Activated CD4-positive, alpha-beta memory T cell treated with anti-CD3 and anti-CD28 coated beads, Interleukin-2, amount 10 ng/mL, durations not matched to agents 7 days and 5 days (primary cell): ENCODE measurements at regions of chr6 and their contacts with region 1.

Region 1: GRCh38 chr6:106163446-106163965 is 77.4 kb downstream of the PRDM1 start:
- DNase-seq: peak; percentile 77
- H3K4me3 Mint-ChIP-seq: peak overlapping the region; percentile 64
- H3K27ac Mint-ChIP-seq: peak overlapping the region; percentile 97
- H3K4me1 Mint-ChIP-seq: peaks cover 83% of the 10 kb centered on the region
- H3K27me3 Mint-ChIP-seq: no peaks in the 10 kb centered on the region

Region 2: GRCh38 chr6:105992315-105992961 is 171.1 kb before region 1 on chr6:
- CTCF ChIA-PET with region 1: interaction called, 11 read pairs
- POLR2A ChIA-PET with region 1: interaction called, 35 read pairs
- DNase-seq: peak; percentile 92
- H3K4me3 Mint-ChIP-seq: peak overlapping the region; percentile 87
- H3K27ac Mint-ChIP-seq: peak overlapping the region; percentile 74
- H3K4me1 Mint-ChIP-seq: peaks cover 70% of the 10 kb centered on the region
- H3K27me3 Mint-ChIP-seq: peaks cover 5% of the 10 kb centered on the region

Region 3: GRCh38 chr6:106103728-106104109 is 59.8 kb before region 1 on chr6:
- CTCF ChIA-PET with region 1: interaction called, 5 read pairs
- POLR2A ChIA-PET with region 1: interaction called, 153 read pairs
- DNase-seq: peak; percentile 63
- H3K4me3 Mint-ChIP-seq: peak overlapping the region; percentile 87
- H3K27ac Mint-ChIP-seq: peak overlapping the region; percentile 97
- H3K4me1 Mint-ChIP-seq: peaks cover 76% of the 10 kb centered on the region
- H3K27me3 Mint-ChIP-seq: no peaks in the 10 kb centered on the region

Region 4: GRCh38 chr6:106125925-106126435 is 37.5 kb before region 1 on chr6:
- CTCF ChIA-PET with region 1: interaction called, 4 read pairs
- POLR2A ChIA-PET with region 1: interaction called, 16 read pairs
- DNase-seq: peak; percentile 81
- H3K4me3 Mint-ChIP-seq: peak overlapping the region; percentile 63
- H3K27ac Mint-ChIP-seq: peak overlapping the region; percentile 79
- H3K4me1 Mint-ChIP-seq: peaks cover 55% of the 10 kb centered on the region
- H3K27me3 Mint-ChIP-seq: peaks cover 2% of the 10 kb centered on the region

Region 5: DNA sequence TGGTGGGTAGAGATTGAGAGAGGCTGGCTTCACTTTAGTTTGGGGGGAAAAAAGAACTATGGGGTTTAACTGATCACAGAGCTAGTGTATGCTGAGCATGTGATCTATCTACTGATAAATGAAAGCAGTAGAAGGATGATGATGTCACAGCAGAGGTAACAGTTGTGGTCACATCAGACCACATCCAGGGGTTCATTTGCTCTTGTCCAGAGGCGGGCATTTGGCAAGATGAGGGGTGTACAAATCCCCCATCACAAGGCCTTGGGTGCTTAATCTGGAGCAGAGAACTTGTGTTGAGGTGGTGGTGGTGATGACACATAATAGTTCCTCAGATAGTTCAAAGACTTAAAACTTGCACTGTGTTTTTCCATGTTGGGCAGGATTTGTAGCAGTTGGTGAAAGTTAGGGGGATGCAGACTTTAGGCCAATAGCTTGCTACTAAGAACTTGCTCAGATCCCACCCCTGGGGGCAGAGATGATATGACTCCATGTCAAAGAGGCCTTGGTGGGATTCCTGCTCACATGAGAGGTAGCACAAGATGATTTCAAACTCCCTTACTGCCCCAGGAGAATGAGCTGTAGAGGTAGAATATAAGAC is 13.9 kb before region 1 on chr6:
- CTCF ChIA-PET with region 1: interaction called, 4 read pairs
- POLR2A ChIA-PET with region 1: interaction called, 14 read pairs
- DNase-seq: peak; percentile 67
- H3K4me3 Mint-ChIP-seq: no peak overlapping the region
- H3K27ac Mint-ChIP-seq: peak overlapping the region; percentile 71
- H3K4me1 Mint-ChIP-seq: peaks cover 58% of the 10 kb centered on the region
- H3K27me3 Mint-ChIP-seq: no peaks in the 10 kb centered on the region

Region 6: DNA sequence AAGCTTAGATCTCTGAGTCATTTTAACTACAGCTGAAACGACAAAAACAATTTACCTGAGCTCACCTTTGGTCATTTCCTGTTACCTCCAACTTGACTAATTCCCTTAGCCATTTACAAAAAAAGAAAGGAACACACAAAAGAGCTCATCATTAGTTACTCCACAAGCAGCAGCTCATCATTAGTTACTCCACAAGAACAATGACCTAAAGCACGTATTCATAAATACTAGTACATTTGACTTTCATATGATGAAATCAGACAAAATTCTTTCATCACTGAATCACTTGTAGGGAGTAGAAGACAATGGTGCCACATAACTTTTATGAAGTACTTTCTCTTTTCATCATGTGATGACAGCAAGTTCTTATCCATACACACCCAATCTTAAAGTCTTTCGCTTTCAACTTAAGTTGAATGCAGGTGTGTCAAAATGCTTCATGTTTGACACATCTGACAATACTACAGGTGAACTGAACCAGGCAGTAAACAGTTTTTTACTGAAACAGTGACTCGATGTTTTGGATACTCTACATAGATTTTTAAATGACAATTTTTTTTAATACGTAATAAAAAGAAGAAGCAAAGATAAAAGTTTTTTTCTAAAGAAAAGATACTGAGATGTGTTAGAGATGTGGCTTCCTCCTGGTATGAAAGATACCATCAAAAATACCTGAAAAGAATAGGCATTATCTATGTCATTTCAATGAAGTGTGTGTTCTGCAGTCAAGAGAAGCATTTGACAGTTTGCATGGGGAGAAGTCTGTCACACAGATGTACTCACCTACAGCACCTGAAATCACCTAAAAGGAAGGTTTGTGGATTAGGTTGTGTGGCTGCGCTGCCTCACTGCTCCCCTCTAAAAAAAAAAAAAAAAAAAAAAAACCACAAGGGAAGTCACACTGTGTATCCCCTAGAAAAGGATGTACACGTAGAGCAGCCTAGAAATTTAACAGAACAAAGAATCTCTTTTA is 31.7 kb after region 1 on chr6:
- CTCF ChIA-PET with region 1: interaction called, 7 read pairs
- POLR2A ChIA-PET with region 1: interaction called, 55 read pairs
- DNase-seq: no peak
- H3K4me3 Mint-ChIP-seq: peak overlapping the region; percentile 67
- H3K27ac Mint-ChIP-seq: peak overlapping the region; percentile 93
- H3K4me1 Mint-ChIP-seq: peaks cover 55% of the 10 kb centered on the region
- H3K27me3 Mint-ChIP-seq: no peaks in the 10 kb centered on the region

Region 7: DNA sequence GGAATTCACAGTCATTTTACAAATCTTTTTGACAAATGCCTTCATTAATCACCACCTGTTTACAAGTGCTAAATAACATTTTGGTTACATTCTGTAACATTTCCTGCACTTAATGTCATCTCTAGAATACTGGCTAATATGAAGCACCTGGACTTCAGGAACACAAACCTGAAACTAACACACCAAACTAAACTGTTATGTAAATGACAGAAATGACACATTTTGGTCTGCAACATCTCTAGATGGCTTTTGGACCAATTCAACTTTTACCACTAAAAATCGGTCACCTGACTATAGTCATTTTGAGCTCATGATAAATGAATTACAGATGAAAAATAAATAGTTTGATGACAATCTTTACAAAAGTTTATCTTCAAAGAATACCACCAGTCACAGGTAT is 81.4 kb after region 1 on chr6:
- CTCF ChIA-PET with region 1: no interaction called
- POLR2A ChIA-PET with region 1: no interaction called
- DNase-seq: no peak
- H3K4me3 Mint-ChIP-seq: no peak overlapping the region
- H3K27ac Mint-ChIP-seq: no peak overlapping the region
- H3K4me1 Mint-ChIP-seq: peaks cover 24% of the 10 kb centered on the region
- H3K27me3 Mint-ChIP-seq: no peaks in the 10 kb centered on the region